Activated naive CD8-positive, alpha-beta T cell treated with anti-CD3 and anti-CD28 coated beads, Interleukin-2, amount 10 ng/mL, durations not matched to agents 7 days and 5 days (primary cell): ENCODE measurements at regions of chr2 and their contacts with region 1.

Region 1: DNA sequence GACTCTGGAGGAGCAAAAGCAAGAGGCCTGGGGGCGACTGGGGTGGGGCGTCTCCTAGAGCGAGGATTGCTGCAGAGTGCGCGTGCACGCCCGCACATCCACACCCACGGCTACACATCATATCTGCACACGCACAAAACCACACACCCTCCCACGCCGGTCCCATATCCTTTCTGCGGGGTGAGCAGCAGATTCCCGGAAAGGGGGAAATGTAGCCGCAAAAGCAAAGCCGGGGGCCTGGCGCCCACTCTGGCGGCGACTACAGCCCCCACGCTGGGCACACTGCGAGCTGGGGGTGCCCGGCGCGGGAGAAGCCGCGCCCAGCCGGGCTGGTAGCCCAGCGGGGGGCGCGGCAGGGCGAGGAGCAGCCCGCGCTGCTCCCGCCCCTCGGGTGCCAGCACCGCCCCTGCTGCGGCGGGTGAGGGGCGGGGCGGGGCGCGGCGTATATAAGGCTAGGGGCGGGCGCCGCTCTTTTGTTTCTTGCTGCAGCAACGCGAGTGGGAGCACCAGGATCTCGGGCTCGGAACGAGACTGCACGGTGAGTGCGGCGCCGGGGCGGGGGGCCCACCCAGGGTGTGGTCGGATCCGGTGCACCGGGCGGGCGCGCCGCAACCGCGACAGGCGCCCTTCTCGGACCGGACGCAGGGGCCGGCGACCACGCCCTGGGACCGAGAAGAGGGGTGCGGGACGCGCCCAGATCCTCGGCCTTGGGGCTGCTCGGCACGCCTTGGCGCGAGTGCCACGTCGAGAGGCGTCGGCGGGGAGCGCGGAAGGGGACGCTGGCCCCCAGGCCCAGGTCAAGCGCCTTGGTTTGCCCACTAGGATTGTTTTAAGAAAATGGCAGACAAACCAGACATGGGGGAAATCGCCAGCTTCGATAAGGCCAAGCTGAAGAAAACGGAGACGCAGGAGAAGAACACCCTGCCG is at the start of gene TMSB10:
- DNase-seq: peak; percentile 96
- ATAC-seq: peak; percentile 48
- H3K4me3 Mint-ChIP-seq: peak within 1 kb of the TSS; percentile 98
- H3K27ac Mint-ChIP-seq: peak within 1 kb of the TSS; percentile 94
- H3K4me1 Mint-ChIP-seq: peaks cover 70% of the 10 kb centered on the region
- H3K27me3 Mint-ChIP-seq: no peaks in the 10 kb centered on the region
- total RNA-seq, gene TMSB10: 4,217 to 4,653 TPM

Region 2: GRCh38 chr2:84386336-84387040 is 519.0 kb before region 1 on chr2:
- POLR2A ChIA-PET with region 1: no interaction called
- DNase-seq: no peak
- ATAC-seq: no peak
- H3K4me3 Mint-ChIP-seq: no peak overlapping the region
- H3K27ac Mint-ChIP-seq: no peak overlapping the region
- H3K4me1 Mint-ChIP-seq: no peaks in the 10 kb centered on the region
- H3K27me3 Mint-ChIP-seq: peaks cover 38% of the 10 kb centered on the region

Region 3: DNA sequence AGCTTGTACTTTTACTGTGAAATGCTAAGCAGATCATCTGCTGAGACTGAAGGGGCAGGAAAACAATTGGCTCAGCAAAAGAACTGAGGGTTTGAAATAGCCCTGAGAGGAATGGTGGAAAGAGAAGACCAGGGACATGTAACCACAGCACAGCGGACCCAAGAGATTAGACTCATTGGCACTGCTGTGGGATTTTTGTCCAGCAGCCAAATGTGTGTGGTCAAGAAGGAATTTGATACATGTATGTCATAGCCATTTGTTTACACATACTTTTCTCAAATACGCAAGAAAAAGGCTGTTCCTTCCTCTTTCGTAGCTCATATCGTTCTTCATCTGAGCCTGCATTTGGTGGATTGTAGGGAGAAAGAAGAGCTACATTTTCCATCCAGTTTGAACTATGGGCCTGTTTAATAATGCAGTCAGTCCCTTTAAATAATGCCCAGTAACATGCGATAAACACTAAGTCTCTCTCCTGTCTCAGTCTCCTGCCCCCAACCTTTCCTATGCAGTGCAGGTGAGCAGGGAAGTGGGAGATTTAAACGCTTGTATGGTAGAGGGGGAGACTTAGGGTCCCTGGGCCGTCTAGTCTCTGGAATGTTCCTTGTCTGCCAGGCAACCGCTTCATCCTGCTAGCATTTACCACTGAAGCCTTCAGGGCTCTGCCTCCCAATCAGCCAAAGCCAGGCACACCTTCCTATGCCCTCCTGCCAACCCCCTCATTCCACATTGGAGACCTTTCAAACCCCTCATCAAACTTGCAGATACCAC is 98.2 kb before region 1 on chr2:
- POLR2A ChIA-PET with region 1: no interaction called
- DNase-seq: no peak
- ATAC-seq: no peak
- H3K4me3 Mint-ChIP-seq: no peak overlapping the region
- H3K27ac Mint-ChIP-seq: no peak overlapping the region
- H3K4me1 Mint-ChIP-seq: peaks cover 7% of the 10 kb centered on the region
- H3K27me3 Mint-ChIP-seq: no peaks in the 10 kb centered on the region

Region 4: DNA sequence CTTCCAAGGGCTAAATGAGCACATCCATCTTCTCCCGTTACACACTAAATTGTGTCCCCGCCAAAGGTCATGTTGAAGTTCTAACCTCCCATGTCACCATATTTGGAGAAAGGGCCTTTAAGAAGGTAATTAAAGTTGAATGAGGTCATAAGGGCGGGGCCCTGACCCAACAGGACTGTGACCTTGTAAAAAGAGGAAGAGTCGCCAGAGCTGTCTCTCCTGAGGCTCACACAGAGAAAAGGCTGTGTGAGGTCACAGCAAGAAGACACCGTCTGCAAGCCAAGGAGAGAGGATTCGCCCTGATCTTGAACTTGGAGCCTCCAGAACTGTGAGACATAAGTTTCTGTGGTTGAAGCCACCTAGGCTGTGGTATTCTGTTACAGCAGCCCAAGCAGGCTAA is 48.7 kb before region 1 on chr2:
- POLR2A ChIA-PET with region 1: interaction called, 16 read pairs
- DNase-seq: no peak
- ATAC-seq: peak; percentile 69
- H3K4me3 Mint-ChIP-seq: peak overlapping the region; percentile 82
- H3K27ac Mint-ChIP-seq: peak overlapping the region; percentile 97
- H3K4me1 Mint-ChIP-seq: peaks cover 80% of the 10 kb centered on the region
- H3K27me3 Mint-ChIP-seq: no peaks in the 10 kb centered on the region

Region 5: GRCh38 chr2:84894758-84895520 is 10.5 kb before region 1 on chr2:
- POLR2A ChIA-PET with region 1: interaction called, 404 read pairs
- DNase-seq: no peak
- ATAC-seq: peak; percentile 45
- H3K4me3 Mint-ChIP-seq: peak overlapping the region; percentile 62
- H3K27ac Mint-ChIP-seq: peak overlapping the region; percentile 75
- H3K4me1 Mint-ChIP-seq: peaks cover 59% of the 10 kb centered on the region
- H3K27me3 Mint-ChIP-seq: no peaks in the 10 kb centered on the region

Region 6: DNA sequence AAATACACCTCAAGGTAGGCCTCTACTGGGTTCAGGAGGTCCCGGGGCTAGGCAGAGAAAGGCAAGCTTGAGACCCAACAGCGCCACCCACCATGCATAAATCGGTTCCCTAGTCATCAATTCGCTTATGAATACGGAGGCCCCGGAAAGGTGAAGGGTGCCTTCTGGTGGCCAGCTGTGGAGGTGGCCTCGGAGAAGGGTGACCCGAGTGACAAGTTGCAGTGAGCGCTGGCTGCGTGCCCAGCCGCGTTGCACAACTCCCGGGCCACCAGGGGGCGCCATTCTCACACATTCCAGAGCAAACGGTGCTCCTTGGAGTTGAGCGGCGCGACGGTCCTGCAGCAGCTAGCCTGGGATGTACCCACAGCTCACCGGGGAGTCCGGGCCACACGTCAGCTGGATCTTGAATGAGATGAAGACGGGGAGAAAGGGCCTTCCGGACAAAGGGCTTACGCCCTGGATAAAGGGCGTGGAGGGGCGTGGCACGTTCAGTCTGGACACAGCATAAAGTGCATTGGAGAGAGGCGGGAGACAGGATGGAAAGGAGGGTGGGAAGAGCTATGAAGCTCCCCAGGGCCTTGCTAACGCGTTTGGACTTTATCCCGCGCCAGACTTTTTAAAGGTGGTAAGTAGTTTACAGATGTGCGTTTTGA is 20.4 kb after region 1 on chr2:
- POLR2A ChIA-PET with region 1: interaction called, 116 read pairs
- DNase-seq: peak; percentile 99
- ATAC-seq: peak; percentile 88
- H3K4me3 Mint-ChIP-seq: peak overlapping the region; percentile 96
- H3K27ac Mint-ChIP-seq: peak overlapping the region; percentile 85
- H3K4me1 Mint-ChIP-seq: peaks cover 27% of the 10 kb centered on the region
- H3K27me3 Mint-ChIP-seq: no peaks in the 10 kb centered on the region

Region 7: DNA sequence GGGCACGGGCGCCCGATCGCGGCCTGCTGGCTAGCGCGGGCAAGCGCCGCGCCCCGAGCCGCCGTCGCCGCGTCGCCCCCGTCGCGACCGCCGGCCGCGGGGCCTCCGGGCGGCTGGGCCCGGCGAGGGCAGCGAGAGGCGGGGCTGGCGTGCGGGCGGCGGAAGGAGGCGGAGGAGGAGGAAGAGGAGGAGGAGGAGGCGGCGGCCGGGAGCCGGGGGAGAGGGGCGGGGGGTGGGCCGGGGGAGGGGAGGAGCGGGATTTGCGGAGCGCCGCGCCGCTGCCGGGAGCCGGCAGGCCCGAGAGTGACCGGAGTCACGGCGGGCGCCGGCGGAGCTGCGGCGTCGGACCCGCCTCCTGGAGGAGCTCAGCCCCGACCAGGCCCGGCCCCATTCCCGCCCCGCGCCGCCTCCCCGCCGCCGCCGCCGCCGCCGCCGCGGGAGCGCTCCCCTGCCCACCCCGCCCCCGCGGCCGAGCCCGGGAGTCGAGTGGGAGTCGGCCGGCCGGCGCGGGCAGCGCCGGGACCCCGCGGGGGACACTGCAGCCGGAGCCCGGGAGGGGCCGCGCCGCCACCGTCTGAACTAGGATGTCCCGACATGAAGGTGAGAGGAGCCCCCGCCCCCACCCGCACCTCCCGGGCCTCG is 65.5 kb after region 1 on chr2 and contains the start of gene KCMF1:
- POLR2A ChIA-PET with region 1: interaction called, 21 read pairs
- DNase-seq: peak; percentile 82
- ATAC-seq: peak; percentile 55
- H3K4me3 Mint-ChIP-seq: peak within 1 kb of the TSS; percentile 99
- H3K27ac Mint-ChIP-seq: peak within 1 kb of the TSS; percentile 100
- H3K4me1 Mint-ChIP-seq: peaks cover 36% of the 10 kb centered on the region
- H3K27me3 Mint-ChIP-seq: no peaks in the 10 kb centered on the region
- total RNA-seq, gene KCMF1: 79.3 to 81.0 TPM